HEK293 (cell line): ENCODE measurements at regions of chrX and their contacts with region 1.

Region 1: GRCh38 chrX:25721564-25721963 is 416.6 kb upstream of the MAGEB18 start:
- H3K4me3 ChIP-seq: no peak overlapping the region
- H3K27ac ChIP-seq: no peak overlapping the region
- H3K4me1 ChIP-seq: no peaks in the 10 kb centered on the region
- CTCF ChIP-seq: no peak

Region 2: DNA sequence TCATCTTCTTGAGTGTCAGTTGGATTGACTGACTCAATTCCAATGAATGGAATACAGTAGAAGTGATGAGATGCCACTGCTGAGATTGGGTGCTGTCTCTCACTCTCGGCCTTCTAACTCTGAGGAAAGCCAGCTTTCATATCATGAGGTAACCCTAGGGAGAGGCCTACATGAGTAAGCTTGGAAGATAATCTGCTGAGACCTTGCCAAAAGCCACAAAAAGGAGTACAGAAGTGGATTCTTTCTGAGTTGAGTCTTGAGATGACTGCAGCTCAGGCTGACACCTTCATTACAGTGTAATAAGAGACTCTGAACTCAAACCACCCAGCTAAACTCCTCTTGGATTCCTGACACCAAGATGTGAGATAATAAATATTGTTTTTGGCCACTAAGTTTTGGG is 120.8 kb before region 1 on chrX:
- CTCF ChIA-PET with region 1: no interaction called
- POLR2A ChIA-PET with region 1: no interaction called
- H3K4me3 ChIP-seq: no peak overlapping the region
- H3K27ac ChIP-seq: no peak overlapping the region
- H3K4me1 ChIP-seq: no peaks in the 10 kb centered on the region
- CTCF ChIP-seq: no peak

Region 3: GRCh38 chrX:25650216-25650820 is 71.2 kb before region 1 on chrX:
- CTCF ChIA-PET with region 1: no interaction called
- POLR2A ChIA-PET with region 1: no interaction called
- H3K4me3 ChIP-seq: no peak overlapping the region
- H3K27ac ChIP-seq: no peak overlapping the region
- H3K4me1 ChIP-seq: no peaks in the 10 kb centered on the region
- CTCF ChIP-seq: no peak

Region 4: DNA sequence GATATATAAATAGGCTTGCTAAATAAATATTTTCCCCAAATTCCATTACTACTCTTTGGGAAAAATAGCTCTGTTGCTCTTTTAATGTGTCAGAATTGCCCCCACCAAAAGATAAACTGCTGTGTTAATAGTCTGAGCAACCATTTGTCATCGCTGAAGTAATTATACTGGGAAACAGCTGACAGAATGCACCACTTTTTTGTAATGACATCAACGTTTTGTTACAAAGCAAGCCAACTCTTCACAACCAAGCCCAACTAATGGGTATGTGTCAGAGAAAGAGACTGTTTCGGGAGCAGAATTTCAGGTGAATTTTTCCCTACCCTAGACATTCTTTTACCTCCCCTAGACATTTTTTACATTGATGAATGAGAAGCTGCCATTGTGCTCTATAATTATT is 11.6 kb after region 1 on chrX:
- CTCF ChIA-PET with region 1: interaction called, 13 read pairs
- POLR2A ChIA-PET with region 1: no interaction called
- H3K4me3 ChIP-seq: no peak overlapping the region
- H3K27ac ChIP-seq: no peak overlapping the region
- H3K4me1 ChIP-seq: no peaks in the 10 kb centered on the region
- CTCF ChIP-seq: no peak

Region 5: GRCh38 chrX:25869761-25870160 is 148.2 kb after region 1 on chrX:
- CTCF ChIA-PET with region 1: no interaction called
- POLR2A ChIA-PET with region 1: no interaction called
- H3K4me3 ChIP-seq: no peak overlapping the region
- H3K27ac ChIP-seq: no peak overlapping the region
- H3K4me1 ChIP-seq: no peaks in the 10 kb centered on the region
- CTCF ChIP-seq: no peak

Region 6: GRCh38 chrX:25941087-25941486 is 219.5 kb after region 1 on chrX:
- CTCF ChIA-PET with region 1: no interaction called
- POLR2A ChIA-PET with region 1: no interaction called
- H3K4me3 ChIP-seq: no peak overlapping the region
- H3K27ac ChIP-seq: no peak overlapping the region
- H3K4me1 ChIP-seq: no peaks in the 10 kb centered on the region
- CTCF ChIP-seq: no peak